ENCODE measurements at regions of chr16 and their contacts with region 1.

Region 1: DNA sequence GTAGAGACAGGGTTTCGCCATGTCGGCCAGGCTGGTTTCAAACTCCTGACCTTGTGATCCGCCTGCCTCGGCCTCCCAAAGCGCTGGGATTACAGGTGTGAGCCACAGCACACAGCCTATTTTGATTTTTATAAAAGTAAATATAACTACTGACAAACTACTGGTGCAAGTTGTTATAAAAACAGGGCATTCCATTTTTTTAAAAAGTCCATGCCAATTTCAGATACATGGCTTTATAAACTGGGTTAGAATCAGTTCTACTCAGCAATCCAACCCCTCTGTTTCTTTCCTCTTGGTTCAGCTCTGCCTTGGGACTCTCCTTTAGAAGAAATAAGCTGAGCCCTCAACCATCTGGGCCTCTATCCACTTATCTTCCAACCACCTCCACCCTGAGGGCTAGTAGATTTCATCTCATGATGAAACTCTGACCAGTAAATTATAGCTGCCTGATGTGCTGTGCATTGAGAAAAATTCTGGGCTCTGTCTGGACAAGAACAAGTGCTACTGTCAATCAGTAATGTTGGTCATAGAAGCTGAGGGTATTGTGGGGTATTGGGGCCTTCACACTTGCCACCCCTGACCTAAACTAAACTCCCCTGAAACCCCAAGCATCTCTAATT is 10.2 kb downstream of the RANBP10 start:
- DNase-seq: no peak
- H3K4me3 Mint-ChIP-seq: no peak overlapping the region
- H3K27ac Mint-ChIP-seq: no peak overlapping the region
- H3K4me1 Mint-ChIP-seq: peaks cover 19% of the 10 kb centered on the region
- H3K27me3 Mint-ChIP-seq: no peaks in the 10 kb centered on the region

Region 2: GRCh38 chr16:67697422-67698185 is 98.6 kb before region 1 on chr16:
- intact Hi-C with region 1: loop called (anchors 10 kb)
- DNase-seq: no peak
- H3K4me3 Mint-ChIP-seq: no peak overlapping the region
- H3K27ac Mint-ChIP-seq: no peak overlapping the region
- H3K4me1 Mint-ChIP-seq: peaks cover 4% of the 10 kb centered on the region
- H3K27me3 Mint-ChIP-seq: no peaks in the 10 kb centered on the region

Region 3: GRCh38 chr16:67773099-67773498 is 23.1 kb before region 1 on chr16:
- intact Hi-C with region 1: no loop called
- DNase-seq: no peak
- H3K4me3 Mint-ChIP-seq: no peak overlapping the region
- H3K27ac Mint-ChIP-seq: no peak overlapping the region
- H3K4me1 Mint-ChIP-seq: peaks cover 3% of the 10 kb centered on the region
- H3K27me3 Mint-ChIP-seq: no peaks in the 10 kb centered on the region

Region 4: DNA sequence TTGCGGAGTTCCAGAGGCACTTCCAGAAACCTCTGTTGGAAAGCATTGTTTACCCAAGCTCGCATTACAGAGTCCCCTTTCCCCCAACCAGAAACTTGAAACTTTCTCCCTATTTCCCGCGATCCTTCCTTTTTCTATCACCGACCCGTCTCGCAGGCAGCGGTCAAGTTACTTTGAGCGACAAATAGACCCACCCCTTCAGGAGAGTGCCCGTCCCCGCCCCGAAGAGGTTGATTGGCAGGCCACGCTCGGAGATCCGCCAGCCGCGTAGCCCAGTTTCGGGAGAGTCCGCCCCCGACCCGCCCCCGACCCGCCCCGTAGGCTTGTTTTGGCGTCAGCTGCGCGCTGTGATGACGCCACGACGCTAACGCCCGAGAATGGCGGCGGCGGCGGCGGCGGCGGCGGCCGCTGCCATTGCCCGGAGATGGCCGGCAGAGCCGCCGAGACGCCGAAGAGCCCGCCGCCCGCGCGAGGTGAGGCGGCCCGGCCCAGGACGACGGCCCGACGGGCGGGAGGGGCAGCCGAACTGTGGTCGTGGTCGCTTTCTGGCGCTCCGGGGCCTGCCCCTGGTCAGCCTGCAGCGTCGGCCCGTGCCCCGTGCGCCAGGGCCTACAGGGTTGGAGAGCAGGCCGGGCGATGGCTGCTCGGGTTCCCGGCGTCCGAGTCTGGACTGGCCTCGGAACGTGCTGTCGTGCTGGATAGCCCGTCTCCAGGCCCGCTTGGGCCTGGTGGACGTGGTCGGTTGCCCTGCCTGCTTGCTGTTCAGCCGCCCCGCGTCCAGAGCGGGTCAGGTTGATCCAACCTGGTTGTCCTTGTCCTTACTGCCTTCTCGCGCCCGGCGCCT is 96.9 kb after region 1 on chr16 and contains the start of gene PSKH1:
- intact Hi-C with region 1: no loop called
- DNase-seq: peak; percentile 97
- H3K4me3 Mint-ChIP-seq: peak within 1 kb of the TSS; percentile 97
- H3K27ac Mint-ChIP-seq: peak within 1 kb of the TSS; percentile 94
- H3K4me1 Mint-ChIP-seq: peaks cover 22% of the 10 kb centered on the region
- H3K27me3 Mint-ChIP-seq: no peaks in the 10 kb centered on the region
- total RNA-seq, gene PSKH1: 14.4 and 16.3 TPM in 2 replicates